T-cell (primary cell): ENCODE measurements at regions of chr3 and their contacts with region 1.

Region 1: GRCh38 chr3:100260685-100261484 is at the start of gene TBC1D23:
- DNase-seq: peak; percentile 91 to 98 (median 95)
- ATAC-seq: peak; percentile 98 to 100 (median 100)
- H3K4me3 ChIP-seq: peak within 1 kb of the TSS; percentile 99 to 100
- H3K4me3 Mint-ChIP-seq: peak within 1 kb of the TSS; percentile 79 to 92 (median 90)
- H3K27ac ChIP-seq: peak within 1 kb of the TSS; percentile 97
- H3K27ac Mint-ChIP-seq: peak within 1 kb of the TSS; percentile 95 to 99
- H3K4me1 ChIP-seq: peaks cover 16 to 28% of the 10 kb centered on the region in 2 experiments
- H3K4me1 Mint-ChIP-seq: peaks cover 55 to 62% (median 58%) of the 10 kb centered on the region in 3 donors
- H3K27me3 ChIP-seq: no peaks in the 10 kb centered on the region
- H3K27me3 Mint-ChIP-seq: no peaks in the 10 kb centered on the region
- total RNA-seq, gene TBC1D23: 26.4 to 33.4 (median 31.9) TPM

Region 2: DNA sequence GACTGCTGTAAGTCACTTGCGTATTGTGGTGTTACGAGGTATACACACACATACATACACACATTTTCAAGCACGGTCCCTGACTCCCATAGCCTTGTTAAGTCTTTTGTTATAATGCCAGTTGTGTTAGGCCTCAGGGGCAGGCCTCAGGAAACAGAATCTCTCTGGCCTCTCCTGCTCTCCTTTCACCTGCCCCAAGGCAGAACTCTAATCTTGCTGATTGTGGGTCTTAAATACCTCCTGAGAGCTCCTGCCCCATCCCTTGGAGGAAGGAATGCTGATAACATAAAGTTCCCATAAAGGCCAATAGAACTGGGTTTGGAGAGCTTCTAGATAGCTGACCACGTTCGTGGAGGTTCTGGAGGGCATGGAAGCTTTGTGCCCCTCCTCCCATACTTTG is 69.8 kb after region 1 on chr3:
- CTCF ChIA-PET with region 1: interaction called in 1 of 2 experiments, 3 read pairs
- POLR2A ChIA-PET with region 1: interaction called in 1 of 2 experiments, 10 read pairs
- DNase-seq: no peak
- ATAC-seq: no peak
- H3K4me3 ChIP-seq: no peak overlapping the region
- H3K4me3 Mint-ChIP-seq: no peak overlapping the region
- H3K27ac ChIP-seq: no peak overlapping the region
- H3K27ac Mint-ChIP-seq: no peak overlapping the region
- H3K4me1 ChIP-seq: peaks cover 3 to 17% of the 10 kb centered on the region in 2 experiments
- H3K4me1 Mint-ChIP-seq: peaks cover 7 to 18% (median 17%) of the 10 kb centered on the region in 3 donors
- H3K27me3 ChIP-seq: no peaks in the 10 kb centered on the region
- H3K27me3 Mint-ChIP-seq: no peaks in the 10 kb centered on the region

Region 3: GRCh38 chr3:100471444-100471843 is 210.6 kb after region 1 on chr3:
- CTCF ChIA-PET with region 1: no interaction called
- POLR2A ChIA-PET with region 1: no interaction called
- DNase-seq: no peak
- ATAC-seq: no peak
- H3K4me3 ChIP-seq: no peak overlapping the region
- H3K4me3 Mint-ChIP-seq: no peak overlapping the region
- H3K27ac ChIP-seq: no peak overlapping the region
- H3K27ac Mint-ChIP-seq: no peak overlapping the region
- H3K4me1 ChIP-seq: no peaks in the 10 kb centered on the region
- H3K4me1 Mint-ChIP-seq: peaks cover 2 to 5% (median 3%) of the 10 kb centered on the region in 3 donors
- H3K27me3 ChIP-seq: no peaks in the 10 kb centered on the region
- H3K27me3 Mint-ChIP-seq: peaks cover 0 to 8% of the 10 kb centered on the region in 2 donors